Heart left ventricle (tissue), 16 donors: ENCODE measurements at regions of chr16 and their contacts with region 1.

Region 1: GRCh38 chr16:10103118-10103517 is 79.1 kb downstream of the GRIN2A start:
- DNase-seq: no peak
- ATAC-seq: no peak
- H3K4me3 ChIP-seq: no peak overlapping the region
- H3K27ac ChIP-seq: no peak overlapping the region
- H3K4me1 ChIP-seq: no peaks in the 10 kb centered on the region
- H3K27me3 ChIP-seq: peaks cover 0 to 24% (median 0%) of the 10 kb centered on the region in 9 donors
- CTCF ChIP-seq: no peak
- POLR2A ChIP-seq: no peak

Region 2: GRCh38 chr16:10039220-10040096 is 63.7 kb before region 1 on chr16:
- intact Hi-C with region 1: loop called in 1 of 10 experiments (anchors 10 kb)
- DNase-seq: peak in 3 of 5 donors; percentile 10 to 44 (median 37)
- ATAC-seq: peak in 3 of 4 donors; percentile 54 to 79 (median 69)
- H3K4me3 ChIP-seq: peak overlapping the region in 9 of 12 donors; percentile 6 to 40 (median 23)
- H3K27ac ChIP-seq: no peak overlapping the region
- H3K4me1 ChIP-seq: peaks cover 0 to 8% (median 0%) of the 10 kb centered on the region in 12 donors
- H3K27me3 ChIP-seq: peaks cover 0 to 29% (median 0%) of the 10 kb centered on the region in 9 donors
- CTCF ChIP-seq: peak in 10 of 12 donors; percentile 7 to 51 (median 30)
- POLR2A ChIP-seq: no peak